Ovary (tissue), 10 donors: ENCODE measurements at regions of chr14 and their contacts with region 1.

Region 1: DNA sequence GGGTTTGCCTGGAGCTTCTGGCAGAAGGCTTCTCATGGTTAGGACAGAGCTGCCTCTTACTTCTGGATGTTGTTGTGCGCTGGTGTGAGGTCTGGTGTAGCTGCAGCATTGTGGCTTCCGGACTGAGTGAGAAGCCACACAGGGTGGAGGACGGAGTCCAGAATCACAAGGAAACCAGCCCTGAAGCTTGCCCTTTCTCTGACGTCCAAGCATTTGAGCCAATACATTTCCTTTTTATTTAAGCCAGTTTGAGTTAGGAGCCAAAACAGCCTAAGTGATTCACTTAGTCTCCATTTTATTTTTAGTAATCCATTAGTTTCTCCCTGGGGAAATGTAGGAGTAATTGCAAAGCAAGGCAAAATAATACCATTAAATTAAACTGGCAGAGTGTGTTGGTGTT is 402.4 kb upstream of the RGS6 start:
- DNase-seq: peak in 3 of 5 donors; percentile 19 to 23 (median 19)
- H3K4me3 ChIP-seq: no peak overlapping the region
- H3K27ac ChIP-seq: no peak overlapping the region
- H3K4me1 ChIP-seq: peaks cover 4% of the 10 kb centered on the region
- H3K27me3 ChIP-seq: no peaks in the 10 kb centered on the region
- CTCF ChIP-seq: no peak
- EP300 ChIP-seq: no peak
- POLR2A ChIP-seq: no peak

Region 2: GRCh38 chr14:71138448-71139293 is 391.2 kb before region 1 on chr14:
- intact Hi-C with region 1: loop called in 1 of 4 experiments (anchors 10 kb)
- DNase-seq: peak; percentile 13 to 64 (median 50)
- H3K4me3 ChIP-seq: no peak overlapping the region
- H3K27ac ChIP-seq: no peak overlapping the region
- H3K4me1 ChIP-seq: peaks cover 2% of the 10 kb centered on the region
- H3K27me3 ChIP-seq: no peaks in the 10 kb centered on the region
- CTCF ChIP-seq: peak; percentile 51 to 79 (median 60)
- EP300 ChIP-seq: no peak
- POLR2A ChIP-seq: no peak

Region 3: DNA sequence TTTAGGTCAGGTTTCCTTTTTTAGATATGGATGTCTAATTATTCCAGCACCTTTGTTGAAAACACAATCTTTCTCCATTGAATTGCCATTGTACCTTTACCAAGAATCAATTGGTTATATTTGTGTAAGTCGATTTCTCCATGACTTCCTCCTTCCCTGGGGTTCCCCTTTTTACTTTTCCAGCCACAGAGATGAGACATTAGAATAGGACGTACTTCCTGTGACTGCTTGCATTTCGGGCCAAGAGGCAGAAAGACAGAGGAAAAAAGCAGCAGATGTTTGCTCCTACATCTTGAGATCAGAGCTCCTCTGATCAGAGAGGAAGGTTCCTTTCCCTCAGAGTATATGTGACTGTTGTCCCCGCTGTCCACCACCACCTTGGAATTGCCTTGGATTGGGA is 51.3 kb before region 1 on chr14:
- intact Hi-C with region 1: no loop called
- DNase-seq: no peak
- H3K4me3 ChIP-seq: no peak overlapping the region
- H3K27ac ChIP-seq: no peak overlapping the region
- H3K4me1 ChIP-seq: no peaks in the 10 kb centered on the region
- H3K27me3 ChIP-seq: no peaks in the 10 kb centered on the region
- CTCF ChIP-seq: no peak
- EP300 ChIP-seq: no peak
- POLR2A ChIP-seq: no peak